Psoas muscle (tissue), 8 donors: ENCODE measurements at regions of chr21 and their contacts with region 1.

Region 1: GRCh38 chr21:42991992-42992740 is 17.8 kb downstream of the PKNOX1 start:
- DNase-seq: peak in 1 of 2 donors; percentile 61
- ATAC-seq: peak; percentile 54 to 84 (median 70)
- H3K4me3 ChIP-seq: no peak overlapping the region
- H3K27ac ChIP-seq: peak overlapping the region; percentile 28
- H3K4me1 ChIP-seq: no peaks in the 10 kb centered on the region
- H3K27me3 ChIP-seq: no peaks in the 10 kb centered on the region
- CTCF ChIP-seq: no peak

Region 2: DNA sequence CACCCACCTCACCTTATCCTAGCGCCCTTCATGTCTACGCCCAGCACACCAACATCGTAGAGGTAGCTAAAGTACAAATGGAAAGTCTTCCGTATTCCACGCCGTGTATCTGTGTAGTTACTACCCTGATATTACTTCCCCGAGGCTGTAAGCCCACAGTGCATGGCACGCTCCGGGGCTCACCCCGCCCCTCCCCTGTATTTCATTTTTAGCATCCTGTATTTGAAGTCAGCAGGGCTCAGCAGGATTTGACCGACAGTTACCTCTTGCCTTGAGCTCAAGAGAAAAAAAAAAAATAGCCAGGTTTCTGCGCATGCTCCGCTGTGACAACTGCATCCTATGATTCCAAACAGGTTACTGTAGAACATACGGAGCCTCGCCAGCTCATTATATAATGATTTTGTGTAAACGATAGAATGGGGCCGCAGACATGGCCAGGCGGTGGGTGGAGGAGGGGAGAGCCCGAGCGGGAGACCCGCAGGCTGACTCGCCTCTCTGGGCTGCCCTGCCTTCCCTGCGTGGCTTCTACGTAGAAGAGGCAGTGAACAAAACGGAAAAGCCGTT is 771.9 kb before region 1 on chr21:
- intact Hi-C with region 1: no loop called
- DNase-seq: peak; percentile 48 to 70
- ATAC-seq: peak; percentile 43 to 86 (median 80)
- H3K4me3 ChIP-seq: peak overlapping the region; percentile 92
- H3K27ac ChIP-seq: peak overlapping the region; percentile 73
- H3K4me1 ChIP-seq: peaks cover 15% of the 10 kb centered on the region
- H3K27me3 ChIP-seq: peaks cover 0 to 2% (median 0%) of the 10 kb centered on the region in 3 donors
- CTCF ChIP-seq: no peak

Region 3: GRCh38 chr21:42939582-42940410 is 52.4 kb before region 1 on chr21:
- intact Hi-C with region 1: loop called (anchors 10 kb)
- DNase-seq: peak; percentile 70 to 77
- ATAC-seq: peak; percentile 98 to 99 (median 98)
- H3K4me3 ChIP-seq: no peak overlapping the region
- H3K27ac ChIP-seq: peak overlapping the region; percentile 56
- H3K4me1 ChIP-seq: peaks cover 13% of the 10 kb centered on the region
- H3K27me3 ChIP-seq: no peaks in the 10 kb centered on the region
- CTCF ChIP-seq: no peak

Region 4: DNA sequence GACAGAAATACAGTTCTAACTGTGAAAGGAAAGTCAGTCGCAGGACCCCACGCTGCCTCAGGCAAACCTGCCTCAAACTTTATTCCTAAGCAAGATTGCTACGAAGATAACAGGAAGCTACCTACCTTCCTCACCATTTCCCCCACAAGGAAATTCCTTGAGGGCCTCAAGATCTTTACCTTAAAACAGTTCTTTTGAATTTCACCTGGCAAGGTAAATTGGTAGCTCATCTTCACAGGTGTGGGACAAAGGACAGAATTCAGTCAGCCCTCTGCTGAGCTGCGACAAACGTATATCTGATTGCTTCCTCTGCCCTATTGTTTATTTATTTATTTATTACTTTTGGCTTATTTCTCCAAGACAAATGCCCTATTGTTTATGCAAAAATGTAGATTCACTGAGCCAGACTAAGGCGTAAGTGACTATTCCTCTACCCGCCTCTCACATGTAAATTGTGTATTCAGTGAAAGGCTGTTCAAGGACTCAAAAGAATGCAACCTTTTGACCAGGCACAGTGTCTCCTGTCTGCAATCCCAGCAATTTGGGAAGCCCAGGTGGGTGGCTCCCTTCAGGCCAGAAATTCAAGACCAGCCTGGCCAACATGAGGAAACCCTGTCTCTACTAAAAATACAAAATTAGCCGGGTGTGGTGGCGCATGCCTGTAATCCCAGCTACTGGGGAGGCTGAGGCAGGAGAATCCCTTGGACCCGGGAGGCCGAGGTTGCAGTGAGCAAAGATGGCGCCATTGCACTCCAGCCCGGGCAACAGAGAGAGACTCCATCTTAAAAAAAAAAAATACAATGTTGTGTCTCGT is 35.1 kb before region 1 on chr21:
- intact Hi-C with region 1: loop called in 1 of 2 experiments (anchors 5 kb)
- DNase-seq: no peak
- ATAC-seq: peak; percentile 55 to 58 (median 56)
- H3K4me3 ChIP-seq: no peak overlapping the region
- H3K27ac ChIP-seq: no peak overlapping the region
- H3K4me1 ChIP-seq: no peaks in the 10 kb centered on the region
- H3K27me3 ChIP-seq: no peaks in the 10 kb centered on the region
- CTCF ChIP-seq: no peak